ENCODE measurements at regions of chr15 and their contacts with region 1.

Region 1: GRCh38 chr15:100635406-100636071 is 33.1 kb downstream of the ASB7 start:
- DNase-seq: no peak
- ATAC-seq: no peak
- H3K4me3 ChIP-seq: no peak overlapping the region
- H3K27ac ChIP-seq: no peak overlapping the region
- H3K4me1 ChIP-seq: no peaks in the 10 kb centered on the region; the same call in 1 of the 2 replicates
- H3K27me3 ChIP-seq: no peaks in the 10 kb centered on the region
- CTCF ChIP-seq: no peak
- POLR2A ChIP-seq: no peak
- RAD21 ChIP-seq: no peak

Region 2: GRCh38 chr15:101269479-101270223 is 634.1 kb after region 1 on chr15:
- CTCF ChIA-PET with region 1: interaction called, 3 read pairs
- POLR2A ChIA-PET with region 1: no interaction called
- dilution Hi-C with region 1: no loop called
- in situ Hi-C with region 1: loop called (anchors 10 kb)
- intact Hi-C with region 1: no loop called
- DNase-seq: no peak
- ATAC-seq: no peak
- H3K4me3 ChIP-seq: no peak overlapping the region
- H3K27ac ChIP-seq: no peak overlapping the region
- H3K4me1 ChIP-seq: peaks cover 10% of the 10 kb centered on the region
- H3K27me3 ChIP-seq: no peaks in the 10 kb centered on the region
- CTCF ChIP-seq: peak; percentile 33
- POLR2A ChIP-seq: no peak
- RAD21 ChIP-seq: no peak